Thyroid gland (tissue), 4 donors: ENCODE measurements at regions of chr12 and their contacts with region 1.

Region 1: DNA sequence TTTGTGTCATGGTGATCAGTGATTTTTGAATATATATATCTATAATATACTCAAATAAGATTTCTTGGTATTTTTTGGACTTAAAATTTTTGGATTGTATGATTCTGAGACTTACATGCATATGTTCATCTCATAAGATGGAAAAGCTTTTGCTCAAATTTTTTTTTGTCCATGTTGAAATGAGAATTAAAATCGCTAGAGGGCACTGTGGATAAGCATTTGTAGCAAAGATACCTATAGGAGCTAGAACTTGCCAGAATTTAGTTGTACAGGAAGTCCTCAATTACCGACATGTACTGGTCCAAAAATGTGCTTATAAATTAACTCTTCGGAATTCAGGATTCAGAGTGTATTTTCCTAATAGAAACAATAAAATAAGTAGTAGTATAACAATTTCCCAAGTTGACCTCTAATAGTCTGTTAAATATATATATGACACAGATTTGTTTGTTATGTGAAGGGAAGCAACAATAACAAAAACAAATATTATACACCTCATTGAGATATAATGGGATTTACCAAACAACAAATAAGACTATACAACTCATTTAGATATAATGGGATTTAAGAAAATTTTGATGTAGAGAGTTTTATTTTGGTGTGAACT is 179.6 kb downstream of the TMEM117 start:
- DNase-seq: no peak
- H3K4me3 ChIP-seq: no peak overlapping the region
- H3K27ac ChIP-seq: no peak overlapping the region
- H3K4me1 ChIP-seq: no peaks in the 10 kb centered on the region
- H3K27me3 ChIP-seq: no peaks in the 10 kb centered on the region
- CTCF ChIP-seq: peak in 4 of 6 experiments; percentile 26 to 66 (median 58)
- POLR2A ChIP-seq: no peak

Region 2: DNA sequence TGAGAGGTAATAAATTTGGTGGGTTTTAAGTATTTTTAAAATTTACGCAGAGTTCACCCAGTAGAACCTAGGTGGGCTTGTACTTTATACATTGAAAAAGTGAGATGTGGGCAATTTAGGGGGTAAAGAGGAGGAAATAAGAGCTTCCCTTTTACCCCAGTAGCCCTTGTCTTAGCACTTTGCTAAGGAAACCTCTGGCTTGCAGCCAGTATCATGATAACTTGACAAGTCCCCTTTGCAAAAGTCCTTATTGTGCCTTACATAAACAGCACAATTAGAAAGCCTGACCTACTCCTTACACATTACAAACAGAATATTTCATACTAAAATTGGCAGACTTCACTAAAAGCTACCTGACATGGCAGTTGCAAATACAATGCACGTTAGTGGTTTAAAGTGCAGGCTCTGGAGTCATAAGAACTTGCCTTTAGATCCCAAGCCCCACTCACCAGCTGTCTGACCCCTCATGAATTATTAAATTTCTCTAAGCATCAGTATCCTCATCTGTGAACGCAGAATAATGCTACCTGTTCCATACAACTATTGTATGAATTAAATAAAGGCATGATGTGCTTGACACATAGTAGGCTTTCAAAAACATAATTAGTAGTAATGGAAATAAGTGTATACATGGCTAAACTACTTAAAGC is 913.9 kb after region 1 on chr12:
- intact Hi-C with region 1: loop called (anchors 10 kb)
- DNase-seq: peak in 1 of 2 donors; percentile 7
- H3K4me3 ChIP-seq: no peak overlapping the region
- H3K27ac ChIP-seq: no peak overlapping the region
- H3K4me1 ChIP-seq: no peaks in the 10 kb centered on the region
- H3K27me3 ChIP-seq: no peaks in the 10 kb centered on the region
- CTCF ChIP-seq: no peak
- POLR2A ChIP-seq: no peak